CD14-positive monocyte (primary cell): ENCODE measurements at regions of chr19 and their contacts with region 1.

Region 1: DNA sequence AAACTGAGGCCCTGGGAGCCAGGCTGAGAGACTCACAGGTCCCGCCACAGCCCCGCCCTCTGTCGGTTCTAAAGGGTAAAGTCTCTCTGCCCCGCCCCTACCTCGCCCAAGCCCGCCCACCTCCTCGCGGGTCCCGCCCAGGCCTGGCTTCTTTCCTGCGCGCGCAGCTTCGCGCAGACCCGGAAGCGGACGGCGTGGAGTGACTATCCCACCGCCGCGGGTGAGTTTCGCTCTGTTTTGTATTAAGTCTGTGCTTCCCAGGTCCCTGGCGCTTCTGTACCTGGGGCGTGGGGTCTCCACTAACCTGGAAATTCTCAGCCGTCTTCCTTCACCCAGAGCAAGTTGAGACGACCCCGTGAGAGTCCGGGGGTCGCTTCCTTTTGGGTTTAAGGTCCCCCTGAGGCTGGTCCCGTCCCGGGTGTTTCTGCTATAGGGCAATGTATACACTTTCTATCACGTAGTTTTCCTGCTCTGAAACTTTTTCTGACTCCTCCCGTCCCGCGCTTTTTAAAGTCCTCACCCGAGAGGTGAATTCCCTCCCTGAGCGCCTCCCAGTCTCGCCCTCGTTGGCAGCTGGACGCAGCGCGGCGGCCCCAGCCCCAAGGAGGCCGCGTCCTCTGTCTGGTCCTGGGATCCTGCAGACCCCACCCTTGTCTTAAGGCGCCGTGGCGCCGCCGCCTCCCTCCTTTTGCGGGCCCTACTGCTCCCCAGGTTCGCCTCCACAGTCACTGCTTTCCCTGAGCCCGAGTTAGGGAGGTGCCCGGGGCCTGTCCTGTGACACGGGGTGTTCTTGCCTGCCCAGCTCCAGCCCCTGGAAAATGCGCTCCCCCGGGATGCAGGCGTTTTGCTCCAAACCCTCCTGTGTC is at the start of gene ZNF765:
- DNase-seq: peak; percentile 88 to 91 (median 90)
- H3K4me3 ChIP-seq: peak within 1 kb of the TSS; percentile 80 to 94 (median 81)
- H3K4me3 Mint-ChIP-seq: peak within 1 kb of the TSS; percentile 96 to 99
- H3K27ac ChIP-seq: peak within 1 kb of the TSS; percentile 53 to 81
- H3K27ac Mint-ChIP-seq: peak within 1 kb of the TSS; percentile 88 to 93 (median 90)
- H3K4me1 ChIP-seq: peaks cover 13 to 19% of the 10 kb centered on the region in 2 donors
- H3K4me1 Mint-ChIP-seq: peaks cover 21% of the 10 kb centered on the region
- H3K27me3 ChIP-seq: no peaks in the 10 kb centered on the region
- H3K27me3 Mint-ChIP-seq: peaks cover 0 to 4% (median 1%) of the 10 kb centered on the region in 3 donors
- CTCF ChIP-seq: peak; percentile 64
- polyA plus RNA-seq, gene ZNF765: 1.5 to 5.0 (median 3.4) TPM

Region 2: GRCh38 chr19:53275480-53275879 is 119.7 kb before region 1 on chr19:
- intact Hi-C with region 1: no loop called
- DNase-seq: no peak
- H3K4me3 ChIP-seq: no peak overlapping the region
- H3K4me3 Mint-ChIP-seq: no peak overlapping the region
- H3K27ac ChIP-seq: no peak overlapping the region
- H3K27ac Mint-ChIP-seq: no peak overlapping the region
- H3K4me1 ChIP-seq: no peaks in the 10 kb centered on the region
- H3K4me1 Mint-ChIP-seq: no peaks in the 10 kb centered on the region
- H3K27me3 ChIP-seq: no peaks in the 10 kb centered on the region
- H3K27me3 Mint-ChIP-seq: no peaks in the 10 kb centered on the region
- CTCF ChIP-seq: no peak

Region 3: GRCh38 chr19:53333463-53334449 is 61.5 kb before region 1 on chr19 and contains the start of gene ZNF845:
- intact Hi-C with region 1: loop called (anchors 1 to 5 kb)
- DNase-seq: peak; percentile 80 to 82 (median 82)
- H3K4me3 ChIP-seq: peak within 1 kb of the TSS; percentile 72 to 91 (median 79)
- H3K4me3 Mint-ChIP-seq: peak within 1 kb of the TSS; percentile 97 to 99
- H3K27ac ChIP-seq: peak within 1 kb of the TSS; percentile 11 to 77
- H3K27ac Mint-ChIP-seq: peak within 1 kb of the TSS; percentile 84 to 91 (median 89)
- H3K4me1 ChIP-seq: peaks cover 16 to 17% of the 10 kb centered on the region in 2 donors
- H3K4me1 Mint-ChIP-seq: peaks cover 21% of the 10 kb centered on the region
- H3K27me3 ChIP-seq: no peaks in the 10 kb centered on the region
- H3K27me3 Mint-ChIP-seq: peaks cover 0 to 8% (median 0%) of the 10 kb centered on the region in 3 donors
- CTCF ChIP-seq: no peak
- polyA plus RNA-seq, gene ZNF845: 0.51 to 3.6 (median 2.6) TPM

Region 4: DNA sequence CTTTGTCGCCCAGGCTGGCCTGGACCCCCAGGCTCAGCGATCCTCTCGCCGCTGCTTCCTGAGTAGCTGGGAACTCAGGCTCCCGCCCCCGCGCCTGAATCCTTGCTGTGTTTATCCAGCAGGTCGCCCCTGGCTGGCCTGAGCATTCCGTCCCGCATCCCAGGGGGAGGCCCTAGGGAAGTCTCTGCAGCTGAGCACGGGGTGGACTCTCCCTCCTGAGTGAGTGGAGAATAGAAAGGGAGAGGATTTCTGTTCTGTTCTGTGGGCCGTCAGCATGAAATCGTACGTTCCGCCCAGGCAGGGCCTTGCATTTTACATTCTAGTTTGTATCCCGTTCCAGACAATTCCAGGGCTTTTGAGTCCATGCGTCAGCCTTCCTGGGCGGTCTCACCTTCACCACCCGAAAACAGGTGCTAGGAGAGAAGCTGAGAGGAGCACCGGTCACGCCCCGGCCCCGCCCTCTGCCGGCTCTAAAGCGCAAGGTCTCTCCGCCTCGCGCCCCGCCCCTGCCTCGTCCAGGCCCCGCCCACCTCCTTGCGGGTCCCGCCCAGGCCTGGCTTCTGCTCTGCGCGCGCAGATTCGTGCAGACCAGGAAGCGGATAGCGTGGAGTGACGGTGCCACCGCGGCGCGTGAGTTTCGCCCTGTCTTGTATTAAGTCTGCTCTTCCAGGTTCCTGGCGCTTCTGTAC is 36.3 kb after region 1 on chr19 and contains the start of gene ZNF761:
- intact Hi-C with region 1: loop called (anchors 2 to 5 kb)
- DNase-seq: peak; percentile 91 to 92 (median 92)
- H3K4me3 ChIP-seq: peak within 1 kb of the TSS; percentile 55 to 94 (median 91)
- H3K4me3 Mint-ChIP-seq: peak within 1 kb of the TSS; percentile 93 to 96
- H3K27ac ChIP-seq: peak within 1 kb of the TSS; percentile 66 to 93
- H3K27ac Mint-ChIP-seq: peak within 1 kb of the TSS; percentile 93 to 96 (median 94)
- H3K4me1 ChIP-seq: peaks cover 18 to 20% of the 10 kb centered on the region in 2 donors
- H3K4me1 Mint-ChIP-seq: peaks cover 19% of the 10 kb centered on the region
- H3K27me3 ChIP-seq: peaks cover 0 to 4% of the 10 kb centered on the region in 2 donors
- H3K27me3 Mint-ChIP-seq: peaks cover 1 to 9% (median 6%) of the 10 kb centered on the region in 3 donors
- CTCF ChIP-seq: peak; percentile 59
- polyA plus RNA-seq, gene ZNF761: 3.4 to 6.1 (median 5.6) TPM